ENCODE measurements at regions of chr1 and their contacts with region 1.

Region 1: GRCh38 chr1:29793101-29793546 is 556.8 kb downstream of the PTPRU start:
- DNase-seq: peak; percentile 81
- ATAC-seq: peak; percentile 83

Region 2: GRCh38 chr1:29664711-29665110 is 128.4 kb before region 1 on chr1:
- intact Hi-C with region 1: no loop called
- DNase-seq: no peak
- ATAC-seq: no peak

Region 3: DNA sequence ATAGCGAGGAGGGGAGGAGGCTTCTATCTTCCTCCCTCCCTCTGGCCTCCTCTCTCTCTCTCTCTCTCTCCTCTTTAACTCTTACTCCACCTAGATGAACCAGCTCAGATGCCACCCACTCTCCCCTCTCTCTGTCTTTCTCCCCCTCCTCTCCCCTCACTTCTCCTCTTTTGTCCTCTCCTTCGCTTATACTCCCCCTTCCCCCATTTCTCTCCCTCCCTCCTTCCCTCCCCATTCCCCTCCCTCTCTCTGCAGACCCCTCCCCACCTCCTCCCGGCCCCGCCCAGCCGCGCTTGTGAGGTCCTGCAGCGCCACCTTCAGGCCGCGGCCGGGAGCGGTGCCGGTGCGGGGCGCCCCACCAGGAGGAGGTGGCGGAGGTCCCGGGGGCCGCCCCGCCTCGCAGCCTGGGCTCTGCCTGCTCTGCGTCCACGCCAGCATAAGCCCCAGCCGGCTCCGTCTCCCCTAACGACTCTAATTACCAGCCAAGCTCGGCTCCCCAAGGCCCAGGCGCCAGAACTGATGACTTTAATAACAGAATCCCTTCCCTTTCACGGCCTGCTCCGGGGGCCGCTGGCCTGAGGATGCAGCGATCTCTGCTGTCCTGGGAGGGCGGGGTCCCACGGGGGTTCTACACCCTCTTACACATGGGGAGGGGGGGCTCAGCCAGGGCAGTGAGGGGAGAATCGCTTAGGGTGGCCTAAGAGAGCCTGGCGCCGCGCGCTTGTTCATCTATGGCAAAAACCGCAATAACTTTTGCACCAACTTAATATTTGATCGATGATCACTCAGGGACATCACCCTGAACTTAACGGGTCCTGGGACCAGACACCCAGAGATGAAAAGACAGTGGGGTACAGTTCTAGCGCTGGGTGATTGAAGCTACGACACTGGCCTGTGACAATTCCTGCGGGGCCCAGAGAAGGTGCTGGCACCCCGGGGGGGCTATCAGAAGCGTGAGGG is 293.0 kb after region 1 on chr1:
- intact Hi-C with region 1: loop called (anchors 5 kb)
- DNase-seq: peak; percentile 74
- ATAC-seq: peak; percentile 58

Measured in Right ventricle myocardium superior (tissue), 1 donor.